ENCODE measurements at regions of chr19 and their contacts with region 1.

Region 1: GRCh38 chr19:18091217-18091608 is 4.5 kb upstream of the IL12RB1 start:
- DNase-seq: peak; percentile 78
- ATAC-seq: peak; percentile 73
- H3K4me3 Mint-ChIP-seq: peak overlapping the region; percentile 77
- H3K27ac Mint-ChIP-seq: peak overlapping the region; percentile 99
- H3K4me1 Mint-ChIP-seq: peaks cover 52% of the 10 kb centered on the region
- H3K27me3 Mint-ChIP-seq: no peaks in the 10 kb centered on the region

Region 2: GRCh38 chr19:18013210-18014111 is 77.8 kb before region 1 on chr19:
- POLR2A ChIA-PET with region 1: no interaction called
- DNase-seq: peak; percentile 45
- ATAC-seq: no peak
- H3K4me3 Mint-ChIP-seq: peak overlapping the region; percentile 57
- H3K27ac Mint-ChIP-seq: peak overlapping the region; percentile 44
- H3K4me1 Mint-ChIP-seq: peaks cover 45% of the 10 kb centered on the region
- H3K27me3 Mint-ChIP-seq: no peaks in the 10 kb centered on the region

Region 3: GRCh38 chr19:18102916-18103542 is 11.8 kb after region 1 on chr19:
- POLR2A ChIA-PET with region 1: interaction called, 38 read pairs
- DNase-seq: no peak
- ATAC-seq: no peak
- H3K4me3 Mint-ChIP-seq: no peak overlapping the region
- H3K27ac Mint-ChIP-seq: no peak overlapping the region
- H3K4me1 Mint-ChIP-seq: peaks cover 23% of the 10 kb centered on the region
- H3K27me3 Mint-ChIP-seq: no peaks in the 10 kb centered on the region

Region 4: GRCh38 chr19:18109733-18110595 is 18.8 kb after region 1 on chr19:
- POLR2A ChIA-PET with region 1: interaction called, 38 read pairs
- DNase-seq: peak; percentile 75
- ATAC-seq: peak; percentile 77
- H3K4me3 Mint-ChIP-seq: peak overlapping the region; percentile 75
- H3K27ac Mint-ChIP-seq: peak overlapping the region; percentile 45
- H3K4me1 Mint-ChIP-seq: peaks cover 15% of the 10 kb centered on the region
- H3K27me3 Mint-ChIP-seq: no peaks in the 10 kb centered on the region

Measured in activated naive CD8-positive, alpha-beta T cell treated with anti-CD3 and anti-CD28 coated beads, Interleukin-2, amount 10 ng/mL, durations not matched to agents 7 days and 5 days (primary cell).